Calu3 (cell line): ENCODE measurements at regions of chr10 and their contacts with region 1.

Region 1: GRCh38 chr10:86786368-86786767 is 29.9 kb downstream of the BMPR1A start:
- DNase-seq: peak; percentile 1
- H3K4me3 Mint-ChIP-seq: no peak overlapping the region
- H3K27ac Mint-ChIP-seq: no peak overlapping the region
- H3K4me1 Mint-ChIP-seq: no peaks in the 10 kb centered on the region
- H3K27me3 Mint-ChIP-seq: no peaks in the 10 kb centered on the region
- CTCF ChIP-seq: no peak

Region 2: GRCh38 chr10:86506499-86506898 is 279.9 kb before region 1 on chr10:
- CTCF ChIA-PET with region 1: no interaction called
- intact Hi-C with region 1: no loop called
- DNase-seq: no peak
- H3K4me3 Mint-ChIP-seq: no peak overlapping the region
- H3K27ac Mint-ChIP-seq: no peak overlapping the region
- H3K4me1 Mint-ChIP-seq: peaks cover under 1% of the 10 kb centered on the region
- H3K27me3 Mint-ChIP-seq: no peaks in the 10 kb centered on the region
- CTCF ChIP-seq: no peak

Region 3: DNA sequence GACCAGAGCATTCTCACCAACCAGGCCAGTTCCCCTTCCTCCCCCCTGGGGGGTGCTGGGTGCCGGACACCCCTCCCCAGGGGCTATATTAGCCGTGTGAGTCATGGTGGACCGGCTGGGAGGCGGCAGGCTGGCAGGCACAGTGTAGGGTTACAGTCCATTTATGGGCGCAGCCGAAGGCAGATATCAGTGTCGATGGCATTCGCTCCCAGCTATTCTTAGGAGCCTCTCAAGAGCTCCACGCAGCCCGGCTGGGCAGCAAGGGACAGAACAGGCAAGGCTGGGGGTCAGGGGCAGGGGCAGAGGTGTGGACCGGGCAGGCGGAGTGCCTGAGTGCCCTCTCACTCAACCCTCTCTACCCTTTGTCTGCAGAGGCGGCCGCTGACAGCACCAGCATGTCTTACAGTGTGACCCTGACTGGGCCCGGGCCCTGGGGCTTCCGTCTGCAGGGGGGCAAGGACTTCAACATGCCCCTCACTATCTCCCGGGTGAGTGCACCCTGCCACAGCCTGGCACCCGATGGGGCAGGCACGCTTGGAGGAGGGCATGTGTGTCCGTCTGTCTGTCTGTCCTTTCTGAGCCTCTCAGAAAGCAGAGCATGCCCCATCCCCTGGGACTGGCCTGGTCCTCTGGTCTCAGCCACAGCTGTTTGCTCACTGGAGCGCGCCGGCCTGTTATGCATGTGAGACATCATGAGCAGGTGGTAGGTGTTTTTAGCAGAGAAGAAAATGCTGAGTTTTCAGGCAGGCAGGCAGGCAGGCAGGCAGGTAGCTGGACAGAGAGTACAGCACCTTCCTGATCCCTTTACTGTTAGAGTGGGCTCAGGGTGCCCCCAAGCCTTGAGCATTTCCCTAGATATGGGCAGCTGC is 117.8 kb before region 1 on chr10 and contains the start of gene LDB3:
- CTCF ChIA-PET with region 1: no interaction called
- intact Hi-C with region 1: no loop called
- DNase-seq: peak; percentile 49
- H3K4me3 Mint-ChIP-seq: no peak within 1 kb of the TSS
- H3K27ac Mint-ChIP-seq: no peak within 1 kb of the TSS
- H3K4me1 Mint-ChIP-seq: peaks cover 14% of the 10 kb centered on the region
- H3K27me3 Mint-ChIP-seq: peaks cover 12% of the 10 kb centered on the region
- CTCF ChIP-seq: no peak
- total RNA-seq, gene LDB3: not detected in 2 replicates

Region 4: DNA sequence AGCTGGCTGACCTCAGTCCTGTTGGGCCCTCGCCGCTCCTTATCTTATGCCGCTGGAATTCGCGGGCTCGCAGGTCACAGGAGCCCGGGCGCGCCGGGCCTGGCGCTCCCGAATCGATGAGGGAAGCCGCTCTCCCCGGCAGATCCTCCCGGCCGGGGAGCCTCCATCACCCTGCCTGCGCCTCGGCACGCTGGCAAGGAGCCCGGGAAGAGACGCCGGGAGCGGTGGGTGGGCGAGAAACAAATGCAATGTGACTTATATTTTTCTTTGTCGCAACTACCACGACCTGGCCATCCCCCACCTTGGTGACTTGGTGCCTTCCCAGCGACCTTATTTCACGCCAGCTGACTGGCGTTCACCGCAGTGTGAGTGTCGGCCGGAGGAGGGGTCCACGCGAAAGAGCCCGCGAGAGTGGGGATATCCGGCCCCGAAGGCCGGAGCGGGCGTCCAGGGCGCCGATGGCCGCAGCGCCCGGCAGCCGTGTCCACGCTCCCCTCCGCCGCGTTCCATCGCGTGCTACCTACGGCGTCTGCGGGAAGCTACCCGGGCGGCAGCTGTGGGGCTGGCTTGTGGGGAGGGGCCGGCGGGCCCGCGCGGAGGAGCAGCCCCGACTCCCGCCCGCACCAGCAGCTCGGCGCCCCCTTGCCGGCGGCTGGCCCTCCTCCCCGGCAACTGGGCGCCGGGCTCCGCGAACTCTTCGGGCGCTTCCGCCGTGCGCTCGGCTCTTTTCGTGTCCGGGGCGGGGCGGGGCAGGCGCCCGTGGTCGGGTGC is 30.4 kb before region 1 on chr10:
- CTCF ChIA-PET with region 1: no interaction called
- intact Hi-C with region 1: loop called (anchors 2 kb)
- DNase-seq: peak; percentile 91
- H3K4me3 Mint-ChIP-seq: peak overlapping the region; percentile 91
- H3K27ac Mint-ChIP-seq: peak overlapping the region; percentile 77
- H3K4me1 Mint-ChIP-seq: peaks cover 38% of the 10 kb centered on the region
- H3K27me3 Mint-ChIP-seq: no peaks in the 10 kb centered on the region
- CTCF ChIP-seq: no peak